ENCODE measurements at regions of chr7 and their contacts with region 1.

Region 1: GRCh38 chr7:130543487-130544010 is 51.7 kb downstream of the MEST start:
- DNase-seq: no peak
- ATAC-seq: no peak
- H3K4me3 ChIP-seq: no peak overlapping the region
- H3K27ac ChIP-seq: no peak overlapping the region
- H3K4me1 ChIP-seq: no peaks in the 10 kb centered on the region
- H3K27me3 ChIP-seq: no peaks in the 10 kb centered on the region
- CTCF ChIP-seq: no peak
- POLR2A ChIP-seq: no peak
- RAD21 ChIP-seq: no peak

Region 2: GRCh38 chr7:130242198-130243014 is 301.1 kb before region 1 on chr7:
- CTCF ChIA-PET with region 1: no interaction called
- POLR2A ChIA-PET with region 1: no interaction called
- dilution Hi-C with region 1: no loop called
- in situ Hi-C with region 1: no loop called
- intact Hi-C with region 1: no loop called
- DNase-seq: peak; percentile 82
- ATAC-seq: peak; percentile 92
- H3K4me3 ChIP-seq: no peak overlapping the region
- H3K27ac ChIP-seq: no peak overlapping the region
- H3K4me1 ChIP-seq: no peaks in the 10 kb centered on the region
- H3K27me3 ChIP-seq: no peaks in the 10 kb centered on the region
- CTCF ChIP-seq: peak; percentile 64
- POLR2A ChIP-seq: no peak
- RAD21 ChIP-seq: peak; percentile 80

Region 3: GRCh38 chr7:130400120-130400591 is 143.4 kb before region 1 on chr7:
- CTCF ChIA-PET with region 1: interaction called, 13 read pairs
- POLR2A ChIA-PET with region 1: no interaction called
- dilution Hi-C with region 1: no loop called
- in situ Hi-C with region 1: no loop called
- intact Hi-C with region 1: no loop called
- DNase-seq: peak; percentile 58
- ATAC-seq: peak; percentile 79
- H3K4me3 ChIP-seq: no peak overlapping the region
- H3K27ac ChIP-seq: peak overlapping the region; percentile 99; the same call in 1 of the 2 replicates
- H3K4me1 ChIP-seq: peaks cover 11% of the 10 kb centered on the region
- H3K27me3 ChIP-seq: no peaks in the 10 kb centered on the region
- CTCF ChIP-seq: no peak
- POLR2A ChIP-seq: no peak
- RAD21 ChIP-seq: no peak

Measured in IMR-90 (cell line).